ENCODE measurements at regions of chr10 and their contacts with region 1.

Region 1: GRCh38 chr10:33341637-33342036 is 7.2 kb upstream of the NRP1 start:
- DNase-seq: no peak
- ATAC-seq: no peak
- H3K4me3 ChIP-seq: peak overlapping the region in 6 of 10 donors; percentile 9 to 33 (median 18)
- H3K27ac ChIP-seq: peak overlapping the region in 8 of 10 donors; percentile 2 to 56 (median 47)
- H3K4me1 ChIP-seq: peaks cover 0 to 54% (median 38%) of the 10 kb centered on the region in 9 donors
- H3K27me3 ChIP-seq: peaks cover 0 to 7% (median 0%) of the 10 kb centered on the region in 7 donors
- CTCF ChIP-seq: no peak

Region 2: DNA sequence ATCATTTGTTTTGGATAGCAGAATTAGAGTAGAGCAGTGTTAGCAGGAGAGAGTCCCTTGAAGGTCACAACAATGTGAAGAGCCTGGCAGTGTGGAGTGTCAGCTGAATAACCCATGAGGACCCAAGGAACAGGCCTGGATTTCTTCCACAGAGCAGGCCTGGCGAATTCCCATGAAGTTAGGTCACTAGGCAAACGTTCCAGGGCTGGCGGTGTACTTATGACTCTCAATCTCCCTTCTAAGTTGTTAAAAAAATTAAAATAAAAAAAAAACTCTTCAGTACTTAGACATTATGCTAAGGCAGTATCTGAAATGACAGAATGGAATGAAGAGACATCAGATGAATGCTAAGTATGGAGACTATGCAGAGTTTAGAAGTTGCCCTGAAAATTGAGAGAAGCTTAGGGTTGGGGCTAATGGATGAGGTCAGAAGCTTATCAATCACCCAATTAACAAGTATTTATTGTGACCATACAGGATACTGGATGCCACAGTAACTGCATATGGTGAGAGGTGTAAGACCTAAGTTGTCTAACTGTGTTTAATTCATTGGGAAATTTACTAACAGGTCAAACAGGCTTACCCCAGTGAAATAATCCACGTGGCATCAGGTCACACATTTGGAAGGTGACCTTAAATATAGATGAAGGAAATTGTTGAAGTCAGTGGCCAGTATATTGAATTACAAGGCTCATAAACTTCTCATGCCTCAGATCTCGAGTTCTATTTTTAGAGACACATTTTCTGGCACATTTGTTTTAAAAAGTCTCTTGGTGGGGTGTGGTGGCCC is 119.1 kb after region 1 on chr10:
- intact Hi-C with region 1: loop called in 4 of 10 experiments (anchors 10 kb)
- DNase-seq: peak; percentile 54 to 69
- ATAC-seq: peak; percentile 83 to 98 (median 96)
- H3K4me3 ChIP-seq: no peak overlapping the region
- H3K27ac ChIP-seq: peak overlapping the region in 8 of 10 donors; percentile 14 to 75 (median 66)
- H3K4me1 ChIP-seq: peaks cover 0 to 31% (median 22%) of the 10 kb centered on the region in 9 donors
- H3K27me3 ChIP-seq: no peaks in the 10 kb centered on the region
- CTCF ChIP-seq: no peak

Region 3: DNA sequence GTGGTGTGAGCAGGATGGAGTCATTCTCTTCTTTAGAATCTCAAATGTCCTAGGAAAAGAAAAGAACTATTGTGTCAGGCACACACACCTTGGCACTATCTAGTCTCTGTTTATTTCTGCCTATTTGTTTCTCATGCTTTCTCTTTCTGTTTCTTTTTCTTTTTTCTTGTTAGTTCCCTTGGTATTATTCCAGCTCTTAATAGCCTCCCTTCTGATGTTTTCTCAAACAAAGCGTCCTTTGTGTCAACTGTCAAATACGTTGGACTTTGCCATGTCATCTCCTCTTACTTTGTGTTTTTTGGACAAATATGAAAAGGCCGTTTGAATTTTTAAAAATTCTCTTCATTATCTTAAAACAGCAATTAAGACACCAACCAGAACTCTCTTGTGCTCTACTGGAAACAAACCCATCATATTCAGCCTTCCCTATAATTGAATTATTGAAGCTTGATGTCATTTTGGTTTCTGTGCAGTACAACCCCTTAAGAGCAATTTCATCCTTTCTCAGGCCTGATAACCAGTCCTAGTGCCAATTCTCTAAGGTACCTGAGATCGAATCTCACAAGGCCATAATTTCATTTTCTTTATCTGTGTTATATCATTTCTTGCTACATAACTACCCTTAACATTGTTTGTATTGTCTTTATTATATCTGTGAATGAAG is 490.6 kb after region 1 on chr10:
- intact Hi-C with region 1: no loop called
- DNase-seq: no peak
- ATAC-seq: no peak
- H3K4me3 ChIP-seq: no peak overlapping the region
- H3K27ac ChIP-seq: no peak overlapping the region
- H3K4me1 ChIP-seq: no peaks in the 10 kb centered on the region
- H3K27me3 ChIP-seq: no peaks in the 10 kb centered on the region
- CTCF ChIP-seq: no peak